Posterior cingulate gyrus (tissue), 11 donors: ENCODE measurements at regions of chr2 and their contacts with region 1.

Region 1: DNA sequence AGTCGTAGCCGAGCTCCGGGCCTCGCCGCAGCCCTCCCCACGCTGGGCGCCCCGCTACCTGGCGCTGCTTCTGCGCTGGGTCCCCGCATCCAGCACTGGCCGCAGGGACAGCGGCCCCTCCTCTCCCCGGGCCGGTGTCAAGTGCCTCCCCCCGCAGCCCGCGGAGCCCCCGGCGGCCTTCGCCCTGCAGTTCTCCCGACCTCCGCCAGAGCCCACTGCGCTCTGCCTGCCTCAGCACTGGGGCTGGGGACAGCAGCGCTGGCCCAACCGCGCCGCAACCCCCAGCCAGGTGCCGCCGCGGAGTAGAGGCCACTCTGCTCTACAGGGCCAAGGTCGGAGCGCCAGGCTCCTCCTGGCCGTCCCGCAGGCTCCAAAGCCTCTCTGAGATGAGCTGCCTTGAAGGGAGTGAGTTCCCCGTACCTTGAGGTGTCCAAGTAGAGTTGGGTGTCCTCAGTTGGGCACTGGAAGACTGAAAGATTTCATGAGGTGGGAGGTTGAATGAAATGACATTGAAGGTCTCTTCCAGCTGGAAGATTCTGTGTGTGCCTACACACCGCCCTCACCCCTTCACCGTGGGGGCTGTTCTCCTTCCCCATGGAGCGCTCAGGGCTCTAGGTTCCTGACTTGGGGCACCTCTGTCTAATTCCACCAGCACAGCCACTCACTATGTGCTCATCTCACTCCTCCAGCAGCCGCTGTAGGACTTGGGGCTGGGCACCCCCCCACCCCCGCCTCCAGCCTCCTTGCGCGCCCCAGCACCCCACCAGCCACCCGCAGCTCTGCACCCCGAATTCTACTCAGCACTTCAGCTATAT is 854 bp upstream of the DNMT3A start:
- DNase-seq: peak; percentile 66 to 97 (median 82)

Region 2: GRCh38 chr2:25376750-25377621 is 34.4 kb after region 1 on chr2:
- intact Hi-C with region 1: loop called (anchors 2 kb)
- DNase-seq: peak; percentile 65 to 97 (median 81)

Region 3: GRCh38 chr2:25664183-25664964 is 321.8 kb after region 1 on chr2:
- intact Hi-C with region 1: loop called (anchors 10 kb)
- DNase-seq: peak in 3 of 10 donors; percentile 41 to 69 (median 52)